CD8-positive, alpha-beta T cell (primary cell): ENCODE measurements at regions of chr2 and their contacts with region 1.

Region 1: DNA sequence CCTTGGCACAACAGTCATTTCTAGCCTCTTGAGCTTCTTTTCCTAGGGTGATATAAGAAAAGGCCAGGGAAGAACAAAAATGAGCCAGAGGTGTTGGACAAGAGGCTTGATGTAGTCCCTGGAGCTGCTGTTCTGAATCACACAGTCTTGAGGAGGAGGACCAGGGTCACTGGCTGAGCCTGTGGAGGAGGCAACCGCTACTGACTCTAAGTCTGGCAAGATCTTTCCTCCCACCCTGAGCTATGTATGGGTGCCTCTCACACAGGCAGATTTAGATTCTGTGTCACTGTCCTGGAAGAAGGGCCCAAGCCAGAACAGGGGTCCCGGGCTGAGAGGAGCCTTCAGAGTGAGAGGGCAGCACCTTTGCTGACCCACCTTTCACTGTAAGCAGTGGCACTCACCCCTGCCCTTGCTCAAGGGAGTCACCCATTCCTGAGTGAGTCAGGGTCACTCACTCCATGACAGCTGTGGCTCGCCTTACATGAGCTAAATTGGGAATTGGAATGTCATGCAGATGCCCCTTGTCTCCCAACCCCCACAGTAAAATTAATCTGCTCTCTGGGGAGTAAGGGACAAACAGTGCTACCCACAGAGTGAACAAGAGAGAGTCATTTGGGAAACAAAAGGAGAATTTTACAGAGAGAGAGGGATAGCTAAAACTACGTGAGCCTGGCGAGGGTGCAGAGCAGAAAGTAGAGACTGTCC is at the start of gene TRIM54:
- DNase-seq: no peak
- ATAC-seq: no peak
- H3K4me3 ChIP-seq: no peak within 1 kb of the TSS
- H3K4me3 Mint-ChIP-seq: no peak within 1 kb of the TSS
- H3K27ac ChIP-seq: no peak within 1 kb of the TSS
- H3K27ac Mint-ChIP-seq: no peak within 1 kb of the TSS
- H3K4me1 ChIP-seq: no peaks in the 10 kb centered on the region
- H3K4me1 Mint-ChIP-seq: no peaks in the 10 kb centered on the region
- H3K27me3 ChIP-seq: no peaks in the 10 kb centered on the region
- H3K27me3 Mint-ChIP-seq: peaks cover 25% of the 10 kb centered on the region
- CTCF ChIP-seq: no peak
- total RNA-seq, gene TRIM54: not detected

Region 2: DNA sequence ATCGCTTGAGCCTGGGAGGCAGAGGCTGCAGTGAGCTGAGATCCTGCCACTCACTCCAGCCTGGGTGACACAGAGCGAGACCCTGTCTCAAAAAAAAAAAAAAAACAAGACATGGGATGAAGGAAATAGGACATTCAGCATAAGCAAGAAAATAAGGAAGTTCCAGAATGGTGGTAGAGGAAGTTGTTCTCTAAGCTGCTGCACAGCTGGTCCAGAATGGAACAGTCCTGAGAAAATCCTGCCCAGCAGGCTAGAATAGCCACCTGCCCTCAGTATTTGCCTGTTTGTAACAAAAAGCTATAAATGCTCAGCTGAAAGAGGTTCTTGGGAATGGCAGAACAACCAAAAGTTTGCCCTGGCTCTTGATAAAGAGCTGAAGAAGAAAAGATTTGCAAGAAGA is 322.7 kb before region 1 on chr2:
- CTCF ChIA-PET with region 1: interaction called, 107 read pairs
- POLR2A ChIA-PET with region 1: interaction called, 5 read pairs
- intact Hi-C with region 1: loop called (anchors 1 kb)
- DNase-seq: no peak
- ATAC-seq: no peak
- H3K4me3 ChIP-seq: no peak overlapping the region
- H3K4me3 Mint-ChIP-seq: no peak overlapping the region
- H3K27ac ChIP-seq: no peak overlapping the region
- H3K27ac Mint-ChIP-seq: no peak overlapping the region
- H3K4me1 ChIP-seq: no peaks in the 10 kb centered on the region
- H3K4me1 Mint-ChIP-seq: no peaks in the 10 kb centered on the region
- H3K27me3 ChIP-seq: peaks cover 0 to 2% of the 10 kb centered on the region in 2 experiments
- H3K27me3 Mint-ChIP-seq: peaks cover 35% of the 10 kb centered on the region
- CTCF ChIP-seq: no peak

Region 3: DNA sequence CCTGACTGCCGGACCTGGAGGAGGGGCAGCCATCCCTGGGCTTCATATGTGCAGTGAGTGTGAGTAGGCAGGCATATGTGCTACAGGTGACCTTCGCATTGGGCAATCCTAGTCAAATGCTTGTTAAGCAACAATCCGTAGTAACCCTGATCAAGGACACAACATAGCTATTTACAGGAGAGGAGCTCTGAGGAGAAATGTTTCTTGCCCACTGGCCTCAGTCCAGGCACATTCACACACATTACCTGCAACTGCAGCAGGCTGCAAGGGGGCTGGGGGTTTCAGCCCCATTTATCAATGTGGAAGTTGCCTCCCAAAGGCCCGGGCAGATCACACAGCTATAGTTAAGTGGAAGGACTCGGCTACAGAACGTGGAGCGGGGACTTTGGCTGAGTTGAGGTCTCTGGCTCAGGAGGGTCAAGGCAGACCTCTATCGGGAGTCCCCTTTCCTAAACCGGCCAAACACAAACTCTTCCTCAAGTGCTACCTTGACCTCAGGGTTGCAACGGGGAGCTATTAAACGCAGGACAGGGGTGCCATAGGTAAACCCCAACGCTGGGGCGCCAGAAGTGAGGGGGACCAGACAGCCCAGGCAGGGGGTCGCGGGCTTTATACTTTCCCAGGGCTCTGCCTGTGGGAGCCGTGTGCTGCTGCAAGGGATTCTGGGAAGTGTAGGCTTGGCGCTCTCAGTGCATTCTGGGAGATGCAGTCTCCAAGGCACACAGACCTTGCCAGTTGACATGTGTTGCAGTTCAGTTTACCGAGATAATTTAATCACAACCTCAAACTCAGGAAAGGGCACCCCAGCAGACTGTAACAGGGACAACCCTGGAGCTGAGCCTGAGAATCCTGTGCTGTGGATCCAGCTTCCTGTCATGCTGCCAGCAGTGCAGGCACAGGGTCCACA is 186.0 kb before region 1 on chr2:
- CTCF ChIA-PET with region 1: interaction called, 40 read pairs
- POLR2A ChIA-PET with region 1: no interaction called
- intact Hi-C with region 1: loop called in 1 of 2 experiments (anchors 1 kb)
- DNase-seq: peak in 5 of 9 experiments; percentile 32 to 69 (median 57)
- ATAC-seq: peak; percentile 88
- H3K4me3 ChIP-seq: peak overlapping the region; percentile 21 to 42
- H3K4me3 Mint-ChIP-seq: peak overlapping the region; percentile 61
- H3K27ac ChIP-seq: no peak overlapping the region
- H3K27ac Mint-ChIP-seq: no peak overlapping the region
- H3K4me1 ChIP-seq: peaks cover 9% of the 10 kb centered on the region
- H3K4me1 Mint-ChIP-seq: peaks cover 11% of the 10 kb centered on the region
- H3K27me3 ChIP-seq: no peaks in the 10 kb centered on the region
- H3K27me3 Mint-ChIP-seq: no peaks in the 10 kb centered on the region
- CTCF ChIP-seq: no peak

Region 4: GRCh38 chr2:27170581-27171333 is 111.2 kb before region 1 on chr2:
- CTCF ChIA-PET with region 1: interaction called, 19 read pairs
- POLR2A ChIA-PET with region 1: no interaction called
- intact Hi-C with region 1: loop called (anchors 1 to 2 kb)
- DNase-seq: no peak
- ATAC-seq: no peak
- H3K4me3 ChIP-seq: no peak overlapping the region
- H3K4me3 Mint-ChIP-seq: no peak overlapping the region
- H3K27ac ChIP-seq: no peak overlapping the region
- H3K27ac Mint-ChIP-seq: no peak overlapping the region
- H3K4me1 ChIP-seq: peaks cover 5% of the 10 kb centered on the region
- H3K4me1 Mint-ChIP-seq: peaks cover 11% of the 10 kb centered on the region
- H3K27me3 ChIP-seq: peaks cover 0 to 5% of the 10 kb centered on the region in 2 experiments
- H3K27me3 Mint-ChIP-seq: peaks cover 9% of the 10 kb centered on the region
- CTCF ChIP-seq: no peak

Region 5: GRCh38 chr2:27249891-27250651 is 31.9 kb before region 1 on chr2:
- CTCF ChIA-PET with region 1: interaction called, 18 read pairs
- POLR2A ChIA-PET with region 1: no interaction called
- intact Hi-C with region 1: loop called (anchors 1 kb)
- DNase-seq: peak in 8 of 9 experiments; percentile 18 to 65 (median 53)
- ATAC-seq: peak; percentile 79
- H3K4me3 ChIP-seq: no peak overlapping the region
- H3K4me3 Mint-ChIP-seq: no peak overlapping the region
- H3K27ac ChIP-seq: no peak overlapping the region
- H3K27ac Mint-ChIP-seq: no peak overlapping the region
- H3K4me1 ChIP-seq: peaks cover 4% of the 10 kb centered on the region
- H3K4me1 Mint-ChIP-seq: peaks cover 2% of the 10 kb centered on the region
- H3K27me3 ChIP-seq: peaks cover 0 to 3% of the 10 kb centered on the region in 2 experiments
- H3K27me3 Mint-ChIP-seq: peaks cover 15% of the 10 kb centered on the region
- CTCF ChIP-seq: peak; percentile 56

Region 6: GRCh38 chr2:27271631-27272340 is 10.2 kb before region 1 on chr2:
- CTCF ChIA-PET with region 1: interaction called, 73 read pairs
- POLR2A ChIA-PET with region 1: interaction called, 3 read pairs
- intact Hi-C with region 1: no loop called
- DNase-seq: no peak
- ATAC-seq: no peak
- H3K4me3 ChIP-seq: no peak overlapping the region
- H3K4me3 Mint-ChIP-seq: no peak overlapping the region
- H3K27ac ChIP-seq: no peak overlapping the region
- H3K27ac Mint-ChIP-seq: no peak overlapping the region
- H3K4me1 ChIP-seq: no peaks in the 10 kb centered on the region
- H3K4me1 Mint-ChIP-seq: no peaks in the 10 kb centered on the region
- H3K27me3 ChIP-seq: no peaks in the 10 kb centered on the region
- H3K27me3 Mint-ChIP-seq: peaks cover 5% of the 10 kb centered on the region
- CTCF ChIP-seq: no peak